Activated CD4-positive, alpha-beta memory T cell treated with anti-CD3 and anti-CD28 coated beads for 36 hours (primary cell): ENCODE measurements at regions of chr20 and their contacts with region 1.

Region 1: GRCh38 chr20:34069341-34070078 is 42.5 kb downstream of the EIF2S2 start:
- DNase-seq: peak; percentile 71
- H3K4me3 Mint-ChIP-seq: no peak overlapping the region
- H3K27ac Mint-ChIP-seq: no peak overlapping the region
- H3K4me1 Mint-ChIP-seq: peaks cover 38% of the 10 kb centered on the region
- H3K27me3 Mint-ChIP-seq: no peaks in the 10 kb centered on the region

Region 2: GRCh38 chr20:33862709-33863403 is 206.7 kb before region 1 on chr20:
- CTCF ChIA-PET with region 1: interaction called, 19 read pairs
- POLR2A ChIA-PET with region 1: no interaction called
- intact Hi-C with region 1: loop called (anchors 2 kb)
- DNase-seq: peak; percentile 60
- H3K4me3 Mint-ChIP-seq: no peak overlapping the region
- H3K27ac Mint-ChIP-seq: no peak overlapping the region
- H3K4me1 Mint-ChIP-seq: peaks cover 19% of the 10 kb centered on the region
- H3K27me3 Mint-ChIP-seq: no peaks in the 10 kb centered on the region

Region 3: GRCh38 chr20:33933469-33933909 is 136.0 kb before region 1 on chr20:
- CTCF ChIA-PET with region 1: interaction called, 30 read pairs
- POLR2A ChIA-PET with region 1: no interaction called
- intact Hi-C with region 1: loop called (anchors 1 kb)
- DNase-seq: peak; percentile 80
- H3K4me3 Mint-ChIP-seq: no peak overlapping the region
- H3K27ac Mint-ChIP-seq: no peak overlapping the region
- H3K4me1 Mint-ChIP-seq: peaks cover 2% of the 10 kb centered on the region
- H3K27me3 Mint-ChIP-seq: no peaks in the 10 kb centered on the region

Region 4: DNA sequence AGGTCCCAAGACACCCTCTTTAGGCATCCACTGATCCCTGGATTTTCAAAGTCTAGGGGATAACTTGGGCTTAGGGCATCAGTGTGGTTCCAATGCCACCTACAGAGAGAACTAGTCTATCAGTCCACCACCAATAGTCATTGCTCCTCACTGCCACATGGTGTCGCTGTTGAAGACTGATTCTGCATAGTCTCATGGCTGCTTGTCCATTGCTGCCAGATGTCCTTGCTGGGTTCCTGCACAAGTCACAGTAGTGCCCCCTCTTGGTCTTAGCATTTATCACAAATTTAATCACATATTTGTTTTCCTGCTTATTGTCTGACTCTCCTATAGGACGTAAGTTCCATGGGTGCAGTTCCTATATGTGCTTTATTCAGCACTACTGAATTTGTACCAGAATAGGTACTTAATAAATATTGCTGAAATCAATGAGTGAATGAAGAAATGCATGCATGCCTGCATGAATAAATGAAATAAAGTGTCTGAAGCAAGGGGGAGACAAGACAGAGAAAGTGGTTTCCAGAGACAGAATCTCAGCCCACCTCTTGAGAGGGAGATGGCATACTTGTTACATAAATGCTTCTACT is 121.7 kb before region 1 on chr20:
- CTCF ChIA-PET with region 1: interaction called, 12 read pairs
- POLR2A ChIA-PET with region 1: no interaction called
- intact Hi-C with region 1: loop called (anchors 5 kb)
- DNase-seq: peak; percentile 60
- H3K4me3 Mint-ChIP-seq: no peak overlapping the region
- H3K27ac Mint-ChIP-seq: no peak overlapping the region
- H3K4me1 Mint-ChIP-seq: no peaks in the 10 kb centered on the region
- H3K27me3 Mint-ChIP-seq: peaks cover 9% of the 10 kb centered on the region

Region 5: GRCh38 chr20:34111702-34112599 is 42.4 kb after region 1 on chr20 and contains the start of gene EIF2S2:
- CTCF ChIA-PET with region 1: interaction called, 3 read pairs
- POLR2A ChIA-PET with region 1: interaction called, 3 read pairs
- intact Hi-C with region 1: loop called (anchors 10 kb)
- DNase-seq: peak; percentile 97
- H3K4me3 Mint-ChIP-seq: peak within 1 kb of the TSS; percentile 97
- H3K27ac Mint-ChIP-seq: peak within 1 kb of the TSS; percentile 98
- H3K4me1 Mint-ChIP-seq: peaks cover 41% of the 10 kb centered on the region
- H3K27me3 Mint-ChIP-seq: no peaks in the 10 kb centered on the region
- total RNA-seq, gene EIF2S2: 151 to 155 TPM

Region 6: DNA sequence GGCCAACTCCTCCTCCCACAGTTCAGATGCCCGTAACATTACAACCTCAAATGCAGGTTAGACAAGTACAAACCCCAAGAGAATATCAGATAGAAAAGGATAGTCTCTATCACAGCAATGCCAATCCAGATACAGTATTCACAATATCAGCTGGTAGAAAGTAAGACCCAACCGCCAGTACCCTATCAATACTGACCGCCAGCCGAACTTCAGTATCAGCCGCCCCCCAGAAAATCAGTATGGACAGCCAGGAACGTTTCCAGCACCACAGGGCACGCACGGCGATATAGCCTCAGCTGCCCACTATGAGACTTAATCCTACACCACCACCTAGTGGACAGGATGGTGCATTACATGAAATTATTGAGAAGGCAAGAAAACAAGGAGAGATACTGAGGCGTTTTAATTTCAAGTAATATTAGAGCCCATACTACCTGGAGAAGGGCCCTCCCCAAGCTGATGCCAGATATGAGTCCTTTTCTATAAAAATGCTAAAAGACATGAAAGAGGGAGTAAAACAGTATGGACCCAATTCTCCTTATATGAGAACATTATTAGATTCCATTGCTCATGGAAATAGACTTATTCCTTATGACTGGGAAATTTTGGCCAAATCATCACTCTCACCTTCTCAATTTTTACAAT is 60.1 kb after region 1 on chr20:
- CTCF ChIA-PET with region 1: interaction called, 4 read pairs
- POLR2A ChIA-PET with region 1: no interaction called
- intact Hi-C with region 1: loop called (anchors 1 kb)
- DNase-seq: peak; percentile 46
- H3K4me3 Mint-ChIP-seq: peak overlapping the region; percentile 0
- H3K27ac Mint-ChIP-seq: peak overlapping the region; percentile 38
- H3K4me1 Mint-ChIP-seq: peaks cover 7% of the 10 kb centered on the region
- H3K27me3 Mint-ChIP-seq: peaks cover 4% of the 10 kb centered on the region